IMR-90 (cell line): ENCODE measurements at regions of chr4 and their contacts with region 1.

Region 1: DNA sequence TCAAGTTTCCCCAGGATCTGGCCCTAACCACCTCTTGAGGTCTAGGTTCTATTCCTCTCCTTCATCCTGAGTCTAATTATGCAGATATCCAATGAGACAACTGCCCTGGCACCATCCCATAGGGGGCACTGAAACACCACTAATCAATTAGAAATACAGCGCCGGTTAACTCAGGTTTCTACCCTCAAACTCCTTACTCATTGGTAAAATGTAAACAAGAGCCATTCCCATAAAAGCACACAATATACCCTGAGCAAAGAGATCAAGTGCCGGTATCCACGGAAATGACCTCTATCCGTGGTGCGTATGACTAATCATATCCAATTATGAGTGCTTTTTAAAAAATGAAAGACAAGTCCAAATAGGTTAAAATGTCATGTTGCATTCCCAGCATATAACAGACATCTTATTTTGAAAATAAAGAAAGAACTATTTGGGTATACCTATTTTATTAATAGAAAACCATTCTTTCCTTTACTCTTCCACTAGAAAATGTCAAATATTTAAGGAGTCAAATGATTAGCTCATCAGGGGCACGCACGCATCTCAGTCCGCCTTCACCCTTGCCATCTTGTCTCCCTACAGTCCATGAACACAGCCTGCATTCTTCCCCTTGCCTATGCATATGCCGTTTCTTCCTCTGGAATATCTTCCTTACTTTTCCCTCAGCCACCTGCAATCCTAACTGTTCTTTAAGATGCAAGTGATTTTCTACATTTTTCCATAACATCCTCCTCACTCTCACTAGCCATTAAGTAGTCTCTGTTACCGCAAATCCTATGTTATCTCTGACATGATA is 141.1 kb downstream of the MAML3 start:
- DNase-seq: peak; percentile 95
- ATAC-seq: peak; percentile 98
- H3K4me3 ChIP-seq: no peak overlapping the region
- H3K27ac ChIP-seq: no peak overlapping the region
- H3K4me1 ChIP-seq: peaks cover 4% of the 10 kb centered on the region
- H3K27me3 ChIP-seq: no peaks in the 10 kb centered on the region
- CTCF ChIP-seq: peak; percentile 91
- POLR2A ChIP-seq: no peak
- RAD21 ChIP-seq: peak; percentile 95

Region 2: DNA sequence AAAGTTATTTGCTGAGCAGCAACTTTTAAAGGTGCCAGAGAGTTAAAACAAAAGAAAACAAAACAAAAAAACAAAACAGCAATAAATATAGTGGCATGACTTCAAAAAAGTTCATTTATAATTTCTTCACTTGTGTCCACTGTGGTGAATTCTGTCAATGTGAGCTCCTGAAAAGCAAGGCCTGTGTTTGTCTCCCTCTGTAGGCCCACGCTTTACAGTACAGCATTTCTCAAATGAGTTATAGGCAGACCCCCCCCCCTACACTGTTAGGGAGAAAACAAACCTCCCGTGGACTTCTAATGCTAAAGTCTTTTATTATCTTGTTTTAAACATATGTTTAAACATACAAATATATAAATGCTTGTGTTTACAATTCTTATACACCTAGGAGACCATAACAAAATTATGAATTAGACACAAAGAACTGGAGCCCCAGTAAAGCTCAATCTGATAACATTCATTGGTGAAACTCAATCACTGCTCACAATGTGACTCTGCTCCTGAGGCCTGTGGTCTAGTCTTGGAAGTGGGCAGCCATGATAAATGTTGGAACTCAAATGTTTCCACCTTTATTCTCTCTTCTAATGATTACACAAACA is 313.6 kb after region 1 on chr4:
- CTCF ChIA-PET with region 1: interaction called, 3 read pairs
- POLR2A ChIA-PET with region 1: no interaction called
- dilution Hi-C with region 1: no loop called
- in situ Hi-C with region 1: no loop called
- intact Hi-C with region 1: loop called (anchors 1 kb)
- DNase-seq: peak; percentile 65
- ATAC-seq: peak; percentile 85
- H3K4me3 ChIP-seq: no peak overlapping the region
- H3K27ac ChIP-seq: no peak overlapping the region
- H3K4me1 ChIP-seq: no peaks in the 10 kb centered on the region
- H3K27me3 ChIP-seq: no peaks in the 10 kb centered on the region
- CTCF ChIP-seq: peak; percentile 74
- POLR2A ChIP-seq: no peak
- RAD21 ChIP-seq: peak; percentile 84

Region 3: DNA sequence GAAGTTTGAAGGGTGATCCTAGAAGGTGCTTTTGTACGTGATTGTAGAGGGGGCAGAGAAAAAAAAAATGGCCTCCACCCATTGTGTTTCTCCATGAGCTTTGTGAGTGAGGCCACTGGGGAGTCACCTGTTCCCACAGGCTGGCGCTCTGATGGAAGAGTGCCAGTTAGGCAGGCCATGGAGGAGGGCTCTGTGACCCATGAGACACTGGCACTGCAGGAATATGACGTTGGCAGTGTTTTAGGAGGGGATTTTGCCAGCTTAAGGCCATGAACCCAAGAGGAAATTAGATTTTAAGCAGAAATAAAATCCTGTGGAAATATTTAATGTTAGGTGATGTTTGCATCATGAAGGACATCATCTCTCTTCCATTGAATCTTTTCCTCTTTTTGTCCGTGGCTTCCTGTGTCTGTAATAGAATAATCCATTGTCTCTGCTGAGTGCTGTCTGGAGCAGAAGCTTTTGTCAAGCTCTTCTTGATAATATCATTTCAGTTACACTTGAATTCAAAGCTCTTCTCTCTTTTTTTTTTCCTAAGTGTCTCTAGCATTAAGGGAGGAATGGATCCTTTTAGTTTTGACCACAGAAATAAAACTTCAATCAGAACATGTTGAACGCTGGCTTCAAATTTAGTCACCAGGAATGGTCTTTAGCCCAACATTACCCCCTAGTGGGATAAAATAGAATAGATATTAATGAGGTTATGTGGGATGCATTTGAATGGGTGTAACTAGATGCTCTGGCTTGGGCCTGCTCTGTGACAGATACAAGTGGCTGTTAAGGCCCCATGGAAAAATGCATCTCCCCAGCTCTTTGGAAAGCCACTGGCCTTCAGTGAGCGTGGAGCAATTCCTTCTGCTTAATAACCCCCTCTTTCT is 596.9 kb after region 1 on chr4:
- CTCF ChIA-PET with region 1: no interaction called
- POLR2A ChIA-PET with region 1: no interaction called
- dilution Hi-C with region 1: no loop called
- in situ Hi-C with region 1: loop called (anchors 25 kb)
- intact Hi-C with region 1: loop called (anchors 5 kb)
- DNase-seq: peak; percentile 55
- ATAC-seq: peak; percentile 92
- H3K4me3 ChIP-seq: no peak overlapping the region
- H3K27ac ChIP-seq: no peak overlapping the region
- H3K4me1 ChIP-seq: no peaks in the 10 kb centered on the region
- H3K27me3 ChIP-seq: peaks cover 7% of the 10 kb centered on the region
- CTCF ChIP-seq: peak; percentile 67
- POLR2A ChIP-seq: no peak
- RAD21 ChIP-seq: peak; percentile 71